GM10248 (cell line): ENCODE measurements at regions of chr6 and their contacts with region 1.

Region 1: DNA sequence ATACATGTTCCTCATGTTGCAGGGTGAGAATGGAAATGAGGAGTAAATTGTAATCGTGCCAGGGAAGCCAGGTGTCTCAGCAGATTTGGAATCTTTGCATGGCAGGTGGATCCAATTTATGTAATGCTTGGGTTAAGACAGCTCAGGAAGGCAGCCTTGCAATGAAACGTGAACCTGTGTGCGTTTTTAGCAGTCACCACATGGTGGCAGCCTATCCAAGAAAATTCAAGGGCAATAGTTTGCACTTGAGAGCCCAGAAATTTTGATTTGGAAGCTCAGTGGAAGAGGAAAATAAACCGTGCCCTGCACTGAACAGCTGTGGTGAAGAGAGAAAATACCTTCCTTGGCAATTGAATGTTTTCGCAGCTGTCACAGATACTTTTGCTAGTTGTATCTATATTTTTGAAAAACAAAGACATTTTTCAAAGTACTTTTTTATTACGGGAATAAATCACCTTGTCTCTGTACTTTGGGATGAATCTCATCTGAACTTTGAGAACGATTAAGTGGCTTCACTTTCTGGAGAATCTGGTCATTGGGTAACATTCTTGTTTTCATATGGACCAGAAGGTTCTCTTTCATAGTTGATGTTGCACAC is 26.5 kb downstream of the MTHFD1L start:
- DNase-seq: peak; percentile 45
- CTCF ChIP-seq: peak; percentile 82

Region 2: GRCh38 chr6:150775415-150776203 is 116.4 kb before region 1 on chr6:
- CTCF ChIA-PET with region 1: no interaction called
- POLR2A ChIA-PET with region 1: no interaction called
- DNase-seq: no peak
- CTCF ChIP-seq: no peak

Region 3: GRCh38 chr6:150841697-150842096 is 50.3 kb before region 1 on chr6:
- CTCF ChIA-PET with region 1: no interaction called
- POLR2A ChIA-PET with region 1: no interaction called
- DNase-seq: no peak
- CTCF ChIP-seq: no peak

Region 4: GRCh38 chr6:150876598-150876997 is 15.4 kb before region 1 on chr6:
- CTCF ChIA-PET with region 1: interaction called, 80 read pairs
- POLR2A ChIA-PET with region 1: interaction called, 5 read pairs
- DNase-seq: no peak
- CTCF ChIP-seq: no peak

Region 5: DNA sequence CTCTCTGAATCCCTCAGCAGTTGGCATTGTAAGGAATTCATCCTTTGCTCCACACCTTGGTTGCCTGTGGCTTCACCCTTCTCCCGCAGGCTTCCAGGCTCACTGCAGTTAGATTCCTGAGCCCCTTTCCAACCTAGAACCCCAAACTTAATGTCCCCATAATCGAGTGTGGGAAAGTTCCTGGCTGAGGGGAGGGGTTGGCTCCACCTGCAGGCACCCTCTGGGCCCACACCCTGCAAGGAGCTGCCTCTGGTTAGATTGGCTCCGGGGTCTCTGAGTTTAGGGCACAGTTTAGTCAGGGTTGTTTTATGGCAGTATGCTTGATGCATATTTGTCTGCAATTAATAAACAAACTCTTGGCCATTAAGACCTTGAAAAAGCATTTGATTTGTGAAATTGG is 36.9 kb after region 1 on chr6:
- CTCF ChIA-PET with region 1: interaction called, 44 read pairs
- POLR2A ChIA-PET with region 1: interaction called, 3 read pairs
- DNase-seq: peak; percentile 39
- CTCF ChIP-seq: peak; percentile 53

Region 6: GRCh38 chr6:151317103-151317994 is 425.4 kb after region 1 on chr6:
- CTCF ChIA-PET with region 1: interaction called, 373 read pairs
- POLR2A ChIA-PET with region 1: no interaction called
- DNase-seq: no peak
- CTCF ChIP-seq: no peak